Posterior vena cava (tissue), 2 donors: ENCODE measurements at regions of chrX and their contacts with region 1.

Region 1: GRCh38 chrX:135977611-135978010 is 3.8 kb upstream of the MMGT1 start:
- DNase-seq: no peak

Region 2: DNA sequence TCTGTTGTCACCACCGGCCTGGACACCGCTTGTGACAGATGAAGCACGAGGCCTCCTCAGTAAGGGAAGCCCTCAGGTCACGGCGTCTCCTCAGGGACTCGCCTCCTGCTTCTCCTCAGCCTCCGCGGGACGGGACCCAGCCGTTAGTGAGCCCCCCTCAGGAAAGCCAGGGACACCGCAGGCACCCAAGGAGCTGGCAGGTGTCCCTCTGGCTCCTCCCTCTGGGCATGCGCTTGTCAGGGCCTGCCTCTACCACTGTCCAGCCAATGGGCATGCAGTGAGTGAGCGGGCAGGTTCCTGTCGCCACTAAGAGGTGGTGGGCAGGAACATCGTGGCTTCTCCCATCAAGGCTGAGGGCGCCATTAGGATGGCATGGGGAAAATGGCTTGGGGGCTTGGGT is 782.9 kb before region 1 on chrX:
- intact Hi-C with region 1: no loop called
- DNase-seq: no peak

Region 3: DNA sequence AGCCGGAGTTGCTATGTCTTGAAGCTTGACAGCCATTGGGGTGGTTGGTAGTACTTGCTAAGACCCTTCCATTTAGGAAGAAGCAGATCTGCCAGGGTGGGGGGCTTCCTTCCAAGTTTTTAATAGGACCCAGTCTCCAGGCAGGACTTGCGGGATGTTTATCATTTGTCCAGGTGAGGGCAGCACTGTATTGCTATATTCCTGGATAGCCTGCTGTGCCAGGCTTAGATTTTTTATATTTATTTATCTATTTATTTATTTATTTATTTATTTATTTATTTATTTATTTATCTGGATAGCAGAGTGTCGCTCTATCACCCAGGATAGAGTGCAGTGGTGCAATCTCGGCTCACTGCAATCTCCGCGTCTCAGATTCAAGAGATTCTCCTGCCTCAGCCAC is 351.6 kb before region 1 on chrX:
- intact Hi-C with region 1: no loop called
- DNase-seq: no peak

Region 4: GRCh38 chrX:135988245-135988644 is 10.6 kb after region 1 on chrX:
- intact Hi-C with region 1: no loop called
- DNase-seq: no peak

Region 5: DNA sequence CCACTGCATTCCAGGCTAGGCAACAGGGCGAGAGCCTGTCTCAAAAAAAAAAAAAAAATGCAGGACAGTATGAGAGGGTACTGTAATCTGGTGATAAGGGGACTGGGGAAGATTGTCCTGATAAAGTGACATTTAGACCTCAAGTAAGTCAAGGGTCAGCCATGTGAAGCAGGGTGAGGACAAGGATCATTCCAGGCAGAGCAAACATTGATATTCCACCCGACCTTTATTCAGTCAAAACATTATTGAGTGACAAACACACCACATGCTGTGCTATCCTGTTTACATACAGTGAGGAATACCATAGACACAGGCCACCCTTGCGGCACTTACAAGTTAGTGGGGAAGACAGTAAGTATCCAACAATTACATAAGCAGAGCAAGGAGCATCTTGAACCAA is 72.0 kb after region 1 on chrX:
- intact Hi-C with region 1: loop called in 1 of 2 experiments (anchors 2 kb)
- DNase-seq: no peak

Region 6: DNA sequence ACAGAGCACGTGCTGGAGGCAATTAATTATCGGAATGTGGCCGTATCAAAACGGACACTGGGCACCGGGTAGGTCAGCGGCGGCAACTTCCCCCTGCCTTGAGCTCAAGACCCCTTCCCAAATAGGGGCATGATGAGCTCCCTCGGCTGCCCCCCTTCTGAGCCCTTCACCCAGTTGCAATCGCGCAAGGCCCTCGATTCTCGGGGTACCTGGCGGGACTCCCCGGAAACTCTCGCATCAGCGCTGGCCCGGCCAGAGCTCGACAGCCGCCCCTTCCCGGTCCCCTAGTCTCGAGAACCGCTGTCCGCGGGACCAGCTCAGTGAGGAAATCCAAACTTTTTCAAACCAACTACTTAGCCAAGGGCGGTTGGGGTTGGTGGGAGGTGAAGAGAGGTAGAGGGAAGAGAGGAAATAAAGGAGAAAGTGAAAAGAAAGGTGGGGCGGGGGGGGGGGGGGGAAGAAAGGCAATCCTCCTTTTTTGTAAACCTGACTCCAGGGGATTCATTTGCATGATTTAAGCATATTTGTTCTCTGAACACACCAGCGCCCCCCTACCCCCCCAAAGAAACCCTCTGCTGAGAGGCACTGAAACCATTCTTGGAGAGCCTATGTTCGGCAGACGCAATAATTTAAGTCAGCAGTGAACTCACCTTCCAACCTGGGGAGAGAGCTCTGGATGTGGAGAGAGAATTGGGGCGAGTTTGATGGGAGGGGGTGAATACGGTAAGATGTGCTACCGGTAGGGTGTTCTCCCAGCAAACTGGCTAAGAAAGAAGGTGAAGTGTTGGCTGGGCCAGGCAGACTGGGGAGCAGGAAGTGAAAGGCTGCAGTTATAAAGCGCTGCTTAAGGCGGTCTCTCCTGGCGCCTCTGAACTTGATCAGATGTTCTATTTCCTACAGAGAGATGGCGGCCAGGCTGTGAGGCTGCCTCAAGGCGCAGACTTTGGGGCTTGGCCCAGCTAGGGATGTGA is 1586.4 kb after region 1 on chrX:
- intact Hi-C with region 1: no loop called
- DNase-seq: no peak